ENCODE measurements at regions of chr4 and their contacts with region 1.

Region 1: DNA sequence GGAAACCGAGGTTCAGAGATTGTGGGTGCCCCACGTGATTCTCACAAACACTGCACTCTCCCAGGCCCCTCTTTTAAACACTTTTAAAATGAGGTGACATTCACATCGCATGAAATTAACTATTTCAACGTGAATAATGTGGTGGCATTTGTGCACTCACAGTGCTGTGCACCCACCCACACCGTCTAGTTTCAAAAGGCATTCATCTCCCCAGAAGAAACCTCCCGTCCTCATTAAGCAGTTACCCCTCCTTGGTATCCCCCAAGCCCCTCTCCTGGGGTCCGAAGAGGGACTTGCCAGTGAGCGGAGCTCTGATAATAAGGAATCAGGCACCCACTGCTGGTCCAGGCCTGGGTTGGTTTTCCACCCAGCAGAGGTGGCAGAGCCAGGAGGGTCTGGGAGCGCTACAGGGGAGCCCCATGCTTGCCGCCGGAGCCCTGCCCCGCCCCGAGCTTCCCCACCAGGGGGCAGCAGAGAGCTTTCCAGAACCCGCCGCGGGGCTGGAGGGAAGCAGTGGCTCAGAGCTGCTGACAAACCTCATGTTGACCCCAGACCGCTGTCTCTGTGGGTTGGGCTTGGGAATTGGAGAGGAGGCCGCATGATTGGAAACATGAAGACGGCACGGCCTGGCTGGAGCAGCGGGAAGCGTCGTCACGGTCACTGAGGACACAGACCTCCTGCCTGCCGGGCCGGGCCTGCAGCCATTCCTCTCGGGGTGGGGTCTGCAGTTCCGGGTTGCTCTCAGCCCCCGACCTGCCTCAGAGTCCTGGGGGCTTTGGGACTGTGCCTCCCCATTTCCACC is 27.5 kb upstream of the HTRA3 start:
- DNase-seq: peak; percentile 81 to 86 (median 83)
- ATAC-seq: peak; percentile 69 to 76 (median 73)
- H3K4me3 ChIP-seq: no peak overlapping the region
- H3K27ac ChIP-seq: peak overlapping the region; percentile 18 to 27 (median 26)
- H3K4me1 ChIP-seq: peaks cover 0 to 18% (median 4%) of the 10 kb centered on the region in 4 donors
- H3K27me3 ChIP-seq: no peaks in the 10 kb centered on the region
- CTCF ChIP-seq: peak; percentile 90 to 99 (median 97)
- POLR2A ChIP-seq: no peak

Region 2: GRCh38 chr4:8409264-8410065 is 167.4 kb after region 1 on chr4:
- intact Hi-C with region 1: loop called (anchors 5 kb)
- DNase-seq: peak in 1 of 3 donors; percentile 22
- ATAC-seq: peak; percentile 37 to 43 (median 40)
- H3K4me3 ChIP-seq: no peak overlapping the region
- H3K27ac ChIP-seq: no peak overlapping the region
- H3K4me1 ChIP-seq: no peaks in the 10 kb centered on the region
- H3K27me3 ChIP-seq: no peaks in the 10 kb centered on the region
- CTCF ChIP-seq: no peak
- POLR2A ChIP-seq: no peak

Measured in right lobe of liver (tissue), 6 donors.